ENCODE measurements at regions of chr12 and their contacts with region 1.

Region 1: GRCh38 chr12:127284870-127285431 is 982.0 kb upstream of the TMEM132C start:
- DNase-seq: peak; percentile 91
- ATAC-seq: peak; percentile 84
- H3K4me3 ChIP-seq: no peak overlapping the region
- H3K27ac ChIP-seq: peak overlapping the region; percentile 90
- H3K4me1 ChIP-seq: peaks cover 24% of the 10 kb centered on the region
- H3K27me3 ChIP-seq: no peaks in the 10 kb centered on the region
- CTCF ChIP-seq: no peak

Region 2: DNA sequence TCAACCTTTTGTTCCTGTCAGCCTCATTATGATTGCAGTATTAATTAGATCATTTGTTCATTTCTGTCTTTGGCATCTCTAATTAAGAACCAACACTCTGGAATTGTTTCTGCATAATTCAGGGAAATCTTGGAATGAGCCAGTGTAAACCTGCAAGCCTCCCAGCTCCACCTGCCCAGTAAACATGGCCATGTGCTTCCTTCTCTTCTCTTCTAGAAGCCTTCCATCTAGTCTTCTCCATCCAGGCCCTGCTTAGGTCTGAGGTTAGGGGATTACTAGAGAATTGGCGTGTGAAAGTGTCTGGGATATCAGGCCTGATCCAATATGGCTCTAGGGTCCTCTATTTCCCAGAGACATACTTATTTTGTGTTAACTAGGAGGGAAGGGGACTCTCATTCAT is 1691.7 kb before region 1 on chr12:
- CTCF ChIA-PET with region 1: no interaction called
- POLR2A ChIA-PET with region 1: no interaction called
- intact Hi-C with region 1: no loop called
- DNase-seq: no peak
- ATAC-seq: no peak
- H3K4me3 ChIP-seq: no peak overlapping the region
- H3K27ac ChIP-seq: no peak overlapping the region
- H3K4me1 ChIP-seq: no peaks in the 10 kb centered on the region
- H3K27me3 ChIP-seq: no peaks in the 10 kb centered on the region
- CTCF ChIP-seq: no peak

Region 3: DNA sequence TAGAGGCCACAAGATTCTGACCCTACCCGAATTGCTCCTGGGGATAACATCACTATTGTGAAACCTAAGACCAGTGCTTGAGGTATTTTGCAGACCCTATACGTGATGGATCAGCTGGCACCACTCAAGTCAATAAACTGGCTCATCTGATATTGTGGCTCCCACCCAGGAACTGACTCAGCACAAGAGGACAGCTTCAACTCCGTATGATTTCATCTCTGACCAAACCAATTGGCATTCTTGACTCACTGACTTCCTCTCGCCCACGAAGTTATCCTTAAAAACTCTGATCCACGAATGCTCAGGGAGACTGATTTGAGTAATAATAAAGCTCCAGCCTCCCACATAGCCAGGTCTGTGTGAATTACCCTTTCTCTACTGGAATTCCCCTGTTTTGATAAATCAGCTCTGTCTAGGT is 54.1 kb before region 1 on chr12:
- CTCF ChIA-PET with region 1: no interaction called
- POLR2A ChIA-PET with region 1: no interaction called
- intact Hi-C with region 1: loop called (anchors 2 kb)
- DNase-seq: peak; percentile 99
- ATAC-seq: peak; percentile 86
- H3K4me3 ChIP-seq: peak overlapping the region; percentile 11; the same call in 1 of the 2 replicates
- H3K27ac ChIP-seq: peak overlapping the region; percentile 84
- H3K4me1 ChIP-seq: peaks cover 21% of the 10 kb centered on the region
- H3K27me3 ChIP-seq: no peaks in the 10 kb centered on the region
- CTCF ChIP-seq: no peak

Measured in PC-3 (cell line).